B cell (primary cell): ENCODE measurements at regions of chr9 and their contacts with region 1.

Region 1: GRCh38 chr9:98118640-98119601 is at the start of gene TRIM14:
- DNase-seq: peak; percentile 70
- ATAC-seq: peak; percentile 71
- H3K4me3 ChIP-seq: peak within 1 kb of the TSS; percentile 80 to 91 (median 89)
- H3K4me3 Mint-ChIP-seq: peak within 1 kb of the TSS; percentile 88
- H3K27ac ChIP-seq: peak within 1 kb of the TSS; percentile 69 to 78
- H3K27ac Mint-ChIP-seq: peak within 1 kb of the TSS; percentile 95
- H3K4me1 ChIP-seq: peaks cover 28 to 33% of the 10 kb centered on the region in 2 donors
- H3K4me1 Mint-ChIP-seq: peaks cover 45% of the 10 kb centered on the region
- H3K27me3 ChIP-seq: no peaks in the 10 kb centered on the region
- H3K27me3 Mint-ChIP-seq: no peaks in the 10 kb centered on the region
- CTCF ChIP-seq: no peak
- total RNA-seq, gene TRIM14: 22.4 and 22.5 TPM in 2 replicates

Region 2: GRCh38 chr9:97930972-97931371 is 187.9 kb before region 1 on chr9:
- CTCF ChIA-PET with region 1: no interaction called
- POLR2A ChIA-PET with region 1: no interaction called
- intact Hi-C with region 1: no loop called
- DNase-seq: no peak
- ATAC-seq: no peak
- H3K4me3 ChIP-seq: no peak overlapping the region
- H3K4me3 Mint-ChIP-seq: no peak overlapping the region
- H3K27ac ChIP-seq: no peak overlapping the region
- H3K27ac Mint-ChIP-seq: no peak overlapping the region
- H3K4me1 ChIP-seq: no peaks in the 10 kb centered on the region
- H3K4me1 Mint-ChIP-seq: peaks cover 2% of the 10 kb centered on the region
- H3K27me3 ChIP-seq: peaks cover 0 to 11% (median 1%) of the 10 kb centered on the region in 4 experiments
- H3K27me3 Mint-ChIP-seq: peaks cover 27% of the 10 kb centered on the region
- CTCF ChIP-seq: no peak

Region 3: DNA sequence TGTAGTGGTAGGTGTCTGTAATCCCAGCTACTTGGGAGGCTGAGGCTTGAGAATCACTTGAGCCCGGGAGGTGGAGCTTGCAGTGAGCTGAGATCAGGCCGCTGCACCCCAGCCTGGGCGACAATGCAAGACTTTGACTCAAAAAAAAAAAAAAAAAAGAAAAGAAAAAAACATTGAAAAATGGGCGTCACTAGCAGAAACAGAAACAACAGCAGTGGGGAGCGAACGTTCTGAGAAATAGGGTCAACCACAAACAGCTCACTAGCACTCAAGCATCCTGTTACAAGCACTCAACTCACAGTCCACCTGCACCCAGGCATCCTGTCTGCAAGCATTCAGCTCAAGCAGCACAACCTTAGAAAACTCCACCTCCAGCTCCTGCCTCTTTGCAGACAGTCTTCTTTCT is 17.1 kb before region 1 on chr9:
- CTCF ChIA-PET with region 1: interaction called, 16 read pairs
- POLR2A ChIA-PET with region 1: interaction called, 6 read pairs
- intact Hi-C with region 1: loop called (anchors 1 kb)
- DNase-seq: peak; percentile 91
- ATAC-seq: peak; percentile 98
- H3K4me3 ChIP-seq: peak overlapping the region in 1 of 5 experiments; percentile 38
- H3K4me3 Mint-ChIP-seq: peak overlapping the region; percentile 68
- H3K27ac ChIP-seq: peak overlapping the region; percentile 66 to 74
- H3K27ac Mint-ChIP-seq: peak overlapping the region; percentile 81
- H3K4me1 ChIP-seq: peaks cover 82 to 87% of the 10 kb centered on the region in 2 donors
- H3K4me1 Mint-ChIP-seq: peaks cover 77% of the 10 kb centered on the region
- H3K27me3 ChIP-seq: no peaks in the 10 kb centered on the region
- H3K27me3 Mint-ChIP-seq: no peaks in the 10 kb centered on the region
- CTCF ChIP-seq: no peak

Region 4: DNA sequence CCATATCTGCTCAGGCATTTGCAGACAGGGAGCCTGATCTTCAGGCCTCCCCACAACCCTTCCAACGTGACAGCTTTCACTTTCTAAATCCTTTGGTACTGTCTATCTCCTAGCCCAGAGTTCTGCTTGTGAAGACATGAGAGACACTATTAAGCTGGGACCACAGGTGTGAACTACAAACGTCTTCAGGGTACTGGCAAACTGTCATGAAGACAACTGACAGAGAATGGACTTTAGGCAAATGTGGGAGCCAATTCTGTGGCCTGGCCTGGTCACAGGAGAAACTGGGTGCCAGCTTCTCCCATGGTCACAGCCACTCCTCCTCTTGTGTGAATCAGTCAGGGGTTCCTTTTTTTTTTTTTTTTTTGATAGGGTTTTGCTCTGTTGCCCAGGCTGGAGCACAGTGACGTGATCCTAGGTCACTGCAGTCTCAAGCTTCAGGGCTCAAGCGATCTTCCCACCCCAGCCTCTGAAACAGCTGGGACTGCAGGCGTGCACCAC is 10.3 kb before region 1 on chr9:
- CTCF ChIA-PET with region 1: interaction called, 11 read pairs
- POLR2A ChIA-PET with region 1: interaction called, 24 read pairs
- intact Hi-C with region 1: loop called (anchors 1 kb)
- DNase-seq: peak; percentile 93
- ATAC-seq: peak; percentile 83
- H3K4me3 ChIP-seq: peak overlapping the region in 1 of 5 experiments; percentile 18
- H3K4me3 Mint-ChIP-seq: peak overlapping the region; percentile 88
- H3K27ac ChIP-seq: peak overlapping the region; percentile 87 to 91
- H3K27ac Mint-ChIP-seq: peak overlapping the region; percentile 100
- H3K4me1 ChIP-seq: peaks cover 58 to 64% of the 10 kb centered on the region in 2 donors
- H3K4me1 Mint-ChIP-seq: peaks cover 60% of the 10 kb centered on the region
- H3K27me3 ChIP-seq: no peaks in the 10 kb centered on the region
- H3K27me3 Mint-ChIP-seq: no peaks in the 10 kb centered on the region
- CTCF ChIP-seq: no peak

Region 5: GRCh38 chr9:98129451-98129881 is 10.5 kb after region 1 on chr9:
- CTCF ChIA-PET with region 1: interaction called, 11 read pairs
- POLR2A ChIA-PET with region 1: interaction called, 4 read pairs
- intact Hi-C with region 1: no loop called
- DNase-seq: peak; percentile 81
- ATAC-seq: peak; percentile 91
- H3K4me3 ChIP-seq: no peak overlapping the region
- H3K4me3 Mint-ChIP-seq: peak overlapping the region; percentile 43
- H3K27ac ChIP-seq: peak overlapping the region; percentile 8 to 42
- H3K27ac Mint-ChIP-seq: peak overlapping the region; percentile 80
- H3K4me1 ChIP-seq: peaks cover 20 to 36% of the 10 kb centered on the region in 2 donors
- H3K4me1 Mint-ChIP-seq: peaks cover 33% of the 10 kb centered on the region
- H3K27me3 ChIP-seq: no peaks in the 10 kb centered on the region
- H3K27me3 Mint-ChIP-seq: no peaks in the 10 kb centered on the region
- CTCF ChIP-seq: no peak